ENCODE measurements at regions of chr17 and their contacts with region 1.

Region 1: DNA sequence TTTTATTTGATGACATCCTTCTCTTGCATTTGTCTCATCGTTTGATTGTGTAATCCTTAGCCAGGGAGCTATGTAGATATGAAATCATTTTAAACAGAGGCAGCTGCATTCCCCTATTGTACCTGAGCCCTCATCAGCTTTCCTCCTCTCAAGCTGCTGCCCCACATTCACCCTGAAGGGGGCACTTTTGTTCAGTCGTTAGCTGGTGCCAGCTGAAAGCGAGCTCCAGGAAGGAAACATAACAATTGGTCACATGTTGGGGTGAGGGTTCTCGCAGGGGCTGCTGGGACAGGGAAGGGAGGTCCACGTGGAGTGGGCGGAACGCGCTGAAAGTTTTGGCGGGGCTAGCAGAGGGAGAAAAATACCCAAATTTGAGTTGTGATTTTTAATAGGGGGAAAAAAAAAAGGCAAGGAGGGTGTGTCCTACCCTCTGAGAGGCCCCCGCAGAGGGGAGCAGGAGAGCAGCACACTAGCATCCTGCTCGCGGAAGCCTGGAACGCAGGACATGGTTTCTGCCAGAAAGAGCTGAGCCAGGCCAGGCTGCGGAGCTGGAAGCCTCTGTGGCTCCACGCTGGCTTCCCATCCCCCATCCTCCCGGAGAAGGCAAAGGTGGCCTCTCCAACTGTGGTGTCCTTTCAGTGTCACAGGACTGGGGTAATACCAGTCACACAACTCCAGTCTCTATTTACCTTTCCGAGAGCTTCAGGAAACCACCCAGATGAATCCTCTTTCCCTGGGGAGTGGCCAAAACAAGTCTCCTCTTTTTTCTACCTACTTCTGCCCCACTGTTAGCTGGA is 8.5 kb upstream of the MSL1 start:
- DNase-seq: peak; percentile 97 to 100
- ATAC-seq: peak; percentile 77 to 87
- H3K4me3 ChIP-seq: peak overlapping the region; percentile 42
- H3K27ac ChIP-seq: peak overlapping the region; percentile 86 to 93
- H3K4me1 ChIP-seq: peaks cover 53% of the 10 kb centered on the region
- CTCF ChIP-seq: peak; percentile 35; the same call in 2 of the 3 replicates
- EP300 ChIP-seq: no peak
- POLR2A ChIP-seq: peak; percentile 62
- RAD21 ChIP-seq: peak; percentile 88 to 95; a peak in 4 of 5 replicates

Region 2: DNA sequence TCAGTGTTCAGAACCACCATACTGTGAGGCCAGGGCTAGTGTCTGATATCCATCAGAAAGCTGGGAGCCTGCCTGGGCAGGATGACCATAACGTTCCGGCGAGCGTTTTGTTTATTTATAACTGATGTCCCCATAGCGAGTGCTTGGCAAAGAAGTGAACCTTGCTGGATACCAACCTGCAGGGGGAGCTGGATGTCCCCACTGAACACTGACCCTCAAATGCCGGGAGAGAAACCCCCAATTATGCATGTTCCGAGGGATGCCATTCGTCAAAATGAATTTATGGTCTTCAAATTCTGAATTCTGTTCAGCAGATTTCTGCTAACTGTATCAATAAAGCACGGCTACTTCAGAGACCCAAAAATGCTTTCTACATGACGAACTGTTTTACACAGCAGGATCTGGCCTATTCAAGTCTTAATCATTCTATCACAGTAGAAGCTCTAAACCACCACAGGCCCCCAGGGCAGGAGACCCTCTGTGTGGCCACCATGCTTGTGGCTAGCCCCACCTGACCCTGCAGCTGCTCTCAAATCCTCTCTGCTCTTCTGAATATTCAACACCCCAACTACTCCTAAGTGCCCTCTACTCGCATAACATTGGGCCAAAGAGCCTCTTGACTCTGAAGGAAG is 74.3 kb before region 1 on chr17:
- CTCF ChIA-PET with region 1: interaction called, 42 read pairs
- POLR2A ChIA-PET with region 1: no interaction called
- DNase-seq: peak; percentile 56 to 68
- ATAC-seq: peak; percentile 80 to 88
- H3K4me3 ChIP-seq: no peak overlapping the region
- H3K27ac ChIP-seq: peak overlapping the region in 1 of 2 experiments; percentile 25; a peak in 1 of 6 replicates
- H3K4me1 ChIP-seq: 0 out of 3 replicates have a peak, but pooled peaks cover 7% of the 10 kb centered on the region
- CTCF ChIP-seq: peak; percentile 67
- EP300 ChIP-seq: no peak
- POLR2A ChIP-seq: no peak
- RAD21 ChIP-seq: peak; percentile 54 to 63

Region 3: GRCh38 chr17:40086150-40087044 is 26.9 kb before region 1 on chr17:
- CTCF ChIA-PET with region 1: interaction called, 83 read pairs
- POLR2A ChIA-PET with region 1: no interaction called
- DNase-seq: peak; percentile 70 to 85
- ATAC-seq: peak; percentile 52 to 84; a peak in 4 of 6 replicates
- H3K4me3 ChIP-seq: no peak overlapping the region
- H3K27ac ChIP-seq: no peak overlapping the region
- H3K4me1 ChIP-seq: peaks cover 15% of the 10 kb centered on the region
- CTCF ChIP-seq: peak; percentile 95
- EP300 ChIP-seq: no peak
- POLR2A ChIP-seq: no peak
- RAD21 ChIP-seq: peak; percentile 97

Region 4: GRCh38 chr17:40139566-40140058 is 26.3 kb after region 1 on chr17:
- CTCF ChIA-PET with region 1: interaction called, 77 read pairs
- POLR2A ChIA-PET with region 1: interaction called, 64 read pairs
- DNase-seq: no peak
- ATAC-seq: peak; percentile 13 to 36
- H3K4me3 ChIP-seq: peak overlapping the region; percentile 58
- H3K27ac ChIP-seq: peak overlapping the region; percentile 91 to 98
- H3K4me1 ChIP-seq: peaks cover 16% of the 10 kb centered on the region; the same call in 2 of the 3 replicates
- CTCF ChIP-seq: no peak
- EP300 ChIP-seq: no peak
- POLR2A ChIP-seq: no peak
- RAD21 ChIP-seq: no peak

Region 5: DNA sequence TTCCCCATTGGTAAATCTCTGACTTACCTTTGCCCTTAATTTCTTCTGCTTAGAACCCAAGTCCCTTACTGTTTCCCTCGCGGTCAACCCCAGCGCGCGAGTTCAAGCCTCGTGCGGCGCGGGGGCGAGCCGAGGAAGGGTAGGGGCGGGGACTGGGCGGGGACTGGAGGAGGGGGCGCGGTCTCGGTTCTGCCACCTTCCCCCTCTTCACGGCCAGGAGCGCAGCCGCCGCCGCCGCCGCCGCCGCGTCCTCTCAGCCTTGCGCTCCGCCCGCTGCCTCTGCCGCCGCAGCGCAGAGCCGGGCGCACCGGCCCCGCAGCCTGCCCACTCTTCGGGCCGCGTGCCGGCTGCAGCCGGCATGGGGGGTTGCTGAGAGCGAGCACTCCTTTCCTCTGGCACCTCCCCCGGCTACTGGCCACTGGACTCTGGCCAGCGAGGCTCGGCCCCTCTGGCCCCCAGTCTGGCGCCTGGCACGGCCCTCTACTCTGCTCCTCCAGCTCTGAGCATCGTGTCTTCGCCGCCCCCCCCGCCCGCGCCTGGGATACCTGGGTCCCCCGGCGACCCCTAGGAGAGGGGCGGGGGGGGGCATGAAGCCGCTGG is 64.1 kb after region 1 on chr17 and contains the start of gene RAPGEFL1:
- CTCF ChIA-PET with region 1: interaction called, 176 read pairs
- POLR2A ChIA-PET with region 1: interaction called, 6 read pairs
- DNase-seq: no peak
- ATAC-seq: peak; percentile 26 to 53; a peak in 3 of 6 replicates
- H3K4me3 ChIP-seq: peak within 1 kb of the TSS; percentile 27; the same call in 2 of the 3 replicates
- H3K27ac ChIP-seq: peak within 1 kb of the TSS in 1 of 2 experiments; percentile 47; a peak in 2 of 6 replicates
- H3K4me1 ChIP-seq: peaks cover 26% of the 10 kb centered on the region
- CTCF ChIP-seq: no peak
- EP300 ChIP-seq: no peak
- POLR2A ChIP-seq: no peak
- RAD21 ChIP-seq: no peak
- polyA plus RNA-seq, gene RAPGEFL1: 3.7 and 4.1 TPM in 2 replicates

Region 6: GRCh38 chr17:40219073-40219860 is 106.0 kb after region 1 on chr17 and contains the start of gene WIPF2:
- CTCF ChIA-PET with region 1: interaction called, 10 read pairs
- POLR2A ChIA-PET with region 1: interaction called, 12 read pairs
- DNase-seq: peak; percentile 96 to 98
- ATAC-seq: peak; percentile 95 to 98
- H3K4me3 ChIP-seq: peak within 1 kb of the TSS; percentile 70
- H3K27ac ChIP-seq: peak within 1 kb of the TSS; percentile 87 to 92
- H3K4me1 ChIP-seq: peaks cover 17% of the 10 kb centered on the region; the same call in 2 of the 3 replicates
- CTCF ChIP-seq: 0 out of 3 replicates have a peak, but pooled peaks have one; percentile 29
- EP300 ChIP-seq: no peak
- POLR2A ChIP-seq: no peak; the same call in 1 of the 2 replicates
- RAD21 ChIP-seq: no peak
- polyA plus RNA-seq, gene WIPF2: 13.8 and 15.3 TPM in 2 replicates

Region 7: GRCh38 chr17:40410082-40410481 is 296.8 kb after region 1 on chr17:
- CTCF ChIA-PET with region 1: no interaction called
- POLR2A ChIA-PET with region 1: no interaction called
- DNase-seq: no peak
- ATAC-seq: no peak
- H3K4me3 ChIP-seq: no peak overlapping the region
- H3K27ac ChIP-seq: 0 out of 6 replicates have a peak overlapping the region, but pooled peaks of 1 of the 2 experiments have one; percentile 15
- H3K4me1 ChIP-seq: peaks cover 14% of the 10 kb centered on the region
- CTCF ChIP-seq: no peak
- EP300 ChIP-seq: no peak
- POLR2A ChIP-seq: no peak
- RAD21 ChIP-seq: no peak